ENCODE measurements at regions of chr22 and their contacts with region 1.

Region 1: DNA sequence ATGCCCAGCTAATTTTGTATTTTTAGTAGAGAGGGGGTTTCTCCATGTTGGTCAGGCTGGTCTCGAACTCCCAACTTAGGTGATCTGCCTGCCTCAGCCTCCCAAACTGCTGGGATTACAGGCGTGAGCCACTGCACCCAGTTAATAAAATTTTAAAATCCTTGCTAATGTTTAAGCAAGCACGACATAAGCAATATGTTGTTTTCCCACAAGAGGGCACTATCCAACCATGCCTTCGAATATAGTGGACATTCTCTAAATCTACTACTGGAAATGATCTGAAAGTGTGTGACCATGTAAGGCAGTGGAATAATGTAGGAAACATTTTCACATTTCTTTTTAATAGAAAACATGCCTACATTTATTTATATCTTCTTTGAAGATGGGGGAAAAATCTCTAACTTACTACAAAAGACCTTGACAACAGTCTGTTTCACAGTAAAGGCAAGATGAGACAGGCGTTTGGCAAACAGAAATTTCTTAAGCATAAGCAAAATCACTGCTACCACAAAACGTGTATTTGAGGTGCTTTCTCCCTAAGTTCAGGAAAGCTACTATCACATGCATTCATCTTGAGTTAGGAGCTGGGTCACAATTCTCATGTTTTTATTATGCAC is 38.2 kb downstream of the PITPNB start:
- DNase-seq: peak in 28 of 42 donors; percentile 12 to 86 (median 61)

Region 2: GRCh38 chr22:27919222-27919941 is 38.5 kb after region 1 on chr22 and contains the start of gene PITPNB:
- intact Hi-C with region 1: loop called (anchors 5 kb)
- DNase-seq: peak; percentile 76 to 98 (median 94)

Region 3: DNA sequence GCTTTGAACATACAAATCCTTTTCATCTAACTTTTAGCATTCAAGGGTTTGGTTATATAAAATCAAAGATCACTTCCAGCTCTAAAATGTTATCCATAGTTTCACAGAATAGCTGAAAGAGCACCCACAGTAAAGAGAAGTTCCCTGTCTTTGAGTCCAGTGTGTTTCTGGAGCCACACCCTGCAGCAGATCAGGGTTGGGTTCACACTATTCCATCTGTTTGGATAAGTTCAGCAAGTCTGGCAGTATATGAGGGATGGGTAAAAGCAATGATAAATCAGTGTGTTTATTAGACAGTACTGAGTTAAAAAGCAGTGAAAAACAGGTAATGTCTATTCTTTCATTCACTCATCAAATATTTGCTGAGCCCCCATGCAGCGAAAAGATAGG is 173.9 kb after region 1 on chr22:
- intact Hi-C with region 1: no loop called
- DNase-seq: no peak

Measured in head of caudate nucleus (tissue), 42 donors.